ENCODE measurements at regions of chr3 and their contacts with region 1.

Region 1: DNA sequence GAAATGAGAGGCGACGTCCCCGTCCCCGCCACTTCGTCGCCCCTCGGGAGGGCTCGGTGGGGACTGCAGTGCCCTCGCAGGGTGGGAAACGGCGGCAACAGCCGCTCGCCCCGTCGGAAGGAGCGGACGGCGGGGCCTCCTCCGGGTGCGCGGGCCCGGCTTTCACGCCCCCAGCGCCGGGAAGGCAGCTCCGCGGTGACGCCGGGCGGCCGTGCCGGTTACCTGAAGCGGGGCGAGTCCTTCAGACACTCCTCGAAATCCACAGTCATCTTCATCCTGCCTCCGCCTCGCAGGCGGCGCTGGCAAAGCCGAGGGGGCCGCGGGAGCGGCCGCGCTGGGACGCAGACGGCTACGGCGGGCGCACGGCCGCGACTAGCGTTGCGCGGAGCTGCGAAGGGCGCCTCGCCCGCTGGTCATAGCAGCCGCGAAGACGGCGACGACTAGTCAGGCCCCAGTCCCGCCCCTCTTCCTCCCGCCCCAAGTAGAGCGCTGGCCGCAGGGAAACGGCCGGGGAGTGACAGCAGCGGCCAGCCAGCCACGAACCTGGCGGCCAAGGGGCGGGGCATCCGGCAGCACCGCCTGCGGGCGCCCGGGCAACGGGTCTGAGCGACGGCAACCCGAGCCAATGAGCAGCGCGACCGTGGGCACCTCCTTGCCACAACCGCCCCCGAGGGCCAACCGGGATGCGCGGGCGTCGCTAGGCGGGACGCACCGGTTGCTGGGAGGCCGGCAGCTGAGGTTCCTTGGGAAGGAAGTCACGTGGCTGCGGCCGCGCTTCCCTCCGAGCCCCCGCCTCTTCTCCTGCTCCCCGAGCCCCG is at the start of gene ACAP2:
- DNase-seq: peak; percentile 100
- H3K4me3 ChIP-seq: peak within 1 kb of the TSS; percentile 83 to 100 (median 90)
- H3K27ac ChIP-seq: peak within 1 kb of the TSS; percentile 91 to 99 (median 96)
- H3K4me1 ChIP-seq: peaks cover 0 to 34% (median 19%) of the 10 kb centered on the region in 4 donors
- H3K27me3 ChIP-seq: no peaks in the 10 kb centered on the region
- CTCF ChIP-seq: no peak
- EP300 ChIP-seq: no peak
- POLR2A ChIP-seq: peak; percentile 69 to 84
- total RNA-seq, gene ACAP2: 28.0 to 57.1 (median 44.4) TPM

Region 2: DNA sequence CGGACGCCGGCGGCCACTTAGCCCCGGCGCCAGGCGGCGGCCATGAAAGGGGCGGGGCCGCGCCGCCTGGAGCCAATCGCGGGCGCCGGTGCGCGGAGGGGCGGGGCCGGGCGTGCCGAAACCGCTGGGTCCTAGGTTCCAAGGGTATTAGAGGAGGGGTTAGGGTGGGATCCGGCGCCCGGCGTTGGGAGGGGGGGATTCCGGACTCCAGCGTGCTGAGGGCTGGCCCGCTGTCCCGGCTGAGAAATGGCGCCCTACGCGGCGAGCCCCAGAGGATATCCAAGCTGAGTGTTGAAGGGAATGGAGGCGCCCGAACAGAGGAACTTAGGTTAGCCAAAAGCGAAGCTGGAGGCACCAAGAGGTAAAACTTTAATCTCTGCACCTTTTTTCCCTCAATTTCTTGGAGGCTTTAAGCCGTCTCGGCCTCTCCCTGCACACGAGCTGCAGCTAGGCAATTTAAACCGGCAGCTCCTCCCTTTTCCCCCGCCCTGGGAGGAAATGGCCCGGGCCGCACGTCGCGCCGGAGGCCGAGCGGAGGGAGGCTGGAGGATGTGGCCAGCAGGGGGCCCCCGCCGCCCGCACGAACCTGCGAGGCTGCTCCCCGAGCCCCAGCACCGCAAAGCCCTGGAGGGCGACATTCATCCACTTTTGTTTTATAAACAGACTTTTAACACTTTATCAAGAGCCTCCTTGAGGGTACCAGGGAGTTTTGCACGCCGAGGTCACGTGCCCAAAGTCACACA is 171.5 kb before region 1 on chr3 and contains the start of gene XXYLT1:
- intact Hi-C with region 1: loop called (anchors 5 kb)
- DNase-seq: peak; percentile 92
- H3K4me3 ChIP-seq: peak within 1 kb of the TSS; percentile 52 to 89 (median 74)
- H3K27ac ChIP-seq: peak within 1 kb of the TSS; percentile 85 to 94 (median 91)
- H3K4me1 ChIP-seq: peaks cover 0 to 24% (median 20%) of the 10 kb centered on the region in 4 donors
- H3K27me3 ChIP-seq: no peaks in the 10 kb centered on the region
- CTCF ChIP-seq: peak; percentile 90 to 94 (median 93)
- EP300 ChIP-seq: no peak
- POLR2A ChIP-seq: no peak
- total RNA-seq, gene XXYLT1: 11.1 to 13.8 (median 11.7) TPM

Region 3: DNA sequence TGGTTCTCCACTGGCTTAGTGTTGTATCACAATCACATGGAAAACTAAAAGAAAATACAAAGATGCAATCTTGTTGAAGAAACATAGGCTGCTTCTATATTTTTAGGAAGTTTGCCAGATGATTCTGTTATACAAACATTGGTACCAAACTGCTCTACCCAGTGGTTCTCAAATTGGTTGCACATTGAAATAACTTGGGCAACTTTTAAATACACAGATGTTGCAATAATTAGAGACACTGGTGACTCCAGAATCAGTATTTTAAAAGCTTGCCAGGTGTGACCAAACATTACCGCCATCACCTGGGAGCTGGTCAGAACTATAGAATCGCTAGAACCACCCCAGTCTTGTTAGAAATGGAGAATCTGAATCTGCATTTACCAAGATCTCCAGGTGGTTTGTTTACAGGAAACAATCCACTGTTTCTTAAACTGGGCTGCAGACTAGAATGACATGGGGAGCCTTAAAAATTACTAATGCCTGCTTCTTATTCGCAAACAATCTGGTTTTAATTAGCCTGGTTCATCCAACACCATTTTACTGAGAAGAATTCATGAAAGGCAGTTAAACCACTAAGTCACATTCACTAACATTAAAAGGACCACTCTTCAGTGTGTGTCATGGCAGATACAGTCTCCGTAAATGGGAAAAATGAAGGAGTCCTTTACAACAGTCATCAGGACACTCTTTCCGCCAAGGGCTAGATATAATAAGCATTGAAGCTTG is 76.4 kb before region 1 on chr3:
- intact Hi-C with region 1: no loop called
- DNase-seq: no peak
- H3K4me3 ChIP-seq: no peak overlapping the region
- H3K27ac ChIP-seq: no peak overlapping the region
- H3K4me1 ChIP-seq: no peaks in the 10 kb centered on the region
- H3K27me3 ChIP-seq: no peaks in the 10 kb centered on the region
- CTCF ChIP-seq: no peak
- EP300 ChIP-seq: no peak
- POLR2A ChIP-seq: no peak

Region 4: GRCh38 chr3:195522254-195523023 is 79.7 kb after region 1 on chr3:
- intact Hi-C with region 1: loop called (anchors 5 kb)
- DNase-seq: no peak
- H3K4me3 ChIP-seq: no peak overlapping the region
- H3K27ac ChIP-seq: no peak overlapping the region
- H3K4me1 ChIP-seq: peaks cover 0 to 4% (median 0%) of the 10 kb centered on the region in 4 donors
- H3K27me3 ChIP-seq: no peaks in the 10 kb centered on the region
- CTCF ChIP-seq: peak; percentile 29 to 80 (median 68)
- EP300 ChIP-seq: no peak
- POLR2A ChIP-seq: no peak

Region 5: GRCh38 chr3:195542698-195543499 is 100.1 kb after region 1 on chr3 and contains the start of gene PPP1R2:
- intact Hi-C with region 1: loop called (anchors 5 kb)
- DNase-seq: peak; percentile 96
- H3K4me3 ChIP-seq: peak within 1 kb of the TSS; percentile 68 to 98 (median 80)
- H3K27ac ChIP-seq: peak within 1 kb of the TSS; percentile 94 to 96 (median 95)
- H3K4me1 ChIP-seq: peaks cover 0 to 69% (median 56%) of the 10 kb centered on the region in 4 donors
- H3K27me3 ChIP-seq: no peaks in the 10 kb centered on the region
- CTCF ChIP-seq: no peak
- EP300 ChIP-seq: no peak
- POLR2A ChIP-seq: peak; percentile 92 to 94
- total RNA-seq, gene PPP1R2: 69.9 to 126 (median 88.0) TPM